Mammary epithelial cell (primary cell): ENCODE measurements at regions of chr1 and their contacts with region 1.

Region 1: DNA sequence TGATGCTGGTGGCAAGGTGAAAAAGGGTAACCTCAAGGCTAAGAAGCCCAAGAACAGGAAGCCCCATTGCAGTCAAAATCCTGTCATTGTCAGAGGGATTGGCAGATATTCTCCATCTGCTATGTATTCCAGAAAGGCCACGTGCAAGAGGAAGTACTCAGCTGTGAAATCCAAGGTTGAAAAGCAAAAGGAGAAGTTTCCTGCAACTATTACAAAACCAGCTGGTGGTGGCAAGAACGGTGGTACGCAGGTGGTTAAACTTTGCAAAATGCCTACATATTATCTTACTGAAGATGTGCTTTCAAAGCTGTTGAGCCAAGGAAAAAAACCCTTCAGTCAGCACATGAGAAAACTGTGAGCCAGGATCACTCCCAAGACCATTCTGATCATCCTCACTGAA is 13.7 kb upstream of the VPS45 start:
- DNase-seq: no peak
- H3K4me3 ChIP-seq: no peak overlapping the region
- H3K27ac ChIP-seq: no peak overlapping the region
- H3K4me1 ChIP-seq: no peaks in the 10 kb centered on the region
- H3K27me3 ChIP-seq: no peaks in the 10 kb centered on the region
- CTCF ChIP-seq: no peak

Region 2: GRCh38 chr1:149899460-149900293 is 154.2 kb before region 1 on chr1 and contains the start of gene BOLA1:
- CTCF ChIA-PET with region 1: no interaction called
- dilution Hi-C with region 1: loop called (anchors 25 kb)
- in situ Hi-C with region 1: no loop called
- intact Hi-C with region 1: loop called (anchors 5 kb)
- DNase-seq: peak; percentile 85
- H3K4me3 ChIP-seq: peak within 1 kb of the TSS; percentile 58 to 66 (median 62)
- H3K27ac ChIP-seq: peak within 1 kb of the TSS; percentile 42
- H3K4me1 ChIP-seq: peaks cover 6% of the 10 kb centered on the region
- H3K27me3 ChIP-seq: no peaks in the 10 kb centered on the region
- CTCF ChIP-seq: no peak
- total RNA-seq, gene BOLA1: 7.7 to 15.8 TPM

Region 3: GRCh38 chr1:150235852-150236613 is 182.1 kb after region 1 on chr1 and contains the start of gene ANP32E:
- CTCF ChIA-PET with region 1: no interaction called
- dilution Hi-C with region 1: no loop called
- in situ Hi-C with region 1: no loop called
- intact Hi-C with region 1: no loop called
- DNase-seq: peak; percentile 100
- H3K4me3 ChIP-seq: peak within 1 kb of the TSS; percentile 70 to 96 (median 89)
- H3K27ac ChIP-seq: peak within 1 kb of the TSS; percentile 94
- H3K4me1 ChIP-seq: peaks cover 10% of the 10 kb centered on the region
- H3K27me3 ChIP-seq: no peaks in the 10 kb centered on the region
- CTCF ChIP-seq: peak in 1 of 2 donors; percentile 20
- total RNA-seq, gene ANP32E: 10.3 to 37.0 TPM

Region 4: GRCh38 chr1:150321826-150322166 is 267.9 kb after region 1 on chr1:
- CTCF ChIA-PET with region 1: no interaction called
- dilution Hi-C with region 1: no loop called
- in situ Hi-C with region 1: no loop called
- intact Hi-C with region 1: no loop called
- DNase-seq: no peak
- H3K4me3 ChIP-seq: peak overlapping the region; percentile 72 to 99 (median 77)
- H3K27ac ChIP-seq: peak overlapping the region; percentile 76
- H3K4me1 ChIP-seq: peaks cover 8% of the 10 kb centered on the region
- H3K27me3 ChIP-seq: no peaks in the 10 kb centered on the region
- CTCF ChIP-seq: no peak